ENCODE measurements at regions of chr11 and their contacts with region 1.

Region 1: DNA sequence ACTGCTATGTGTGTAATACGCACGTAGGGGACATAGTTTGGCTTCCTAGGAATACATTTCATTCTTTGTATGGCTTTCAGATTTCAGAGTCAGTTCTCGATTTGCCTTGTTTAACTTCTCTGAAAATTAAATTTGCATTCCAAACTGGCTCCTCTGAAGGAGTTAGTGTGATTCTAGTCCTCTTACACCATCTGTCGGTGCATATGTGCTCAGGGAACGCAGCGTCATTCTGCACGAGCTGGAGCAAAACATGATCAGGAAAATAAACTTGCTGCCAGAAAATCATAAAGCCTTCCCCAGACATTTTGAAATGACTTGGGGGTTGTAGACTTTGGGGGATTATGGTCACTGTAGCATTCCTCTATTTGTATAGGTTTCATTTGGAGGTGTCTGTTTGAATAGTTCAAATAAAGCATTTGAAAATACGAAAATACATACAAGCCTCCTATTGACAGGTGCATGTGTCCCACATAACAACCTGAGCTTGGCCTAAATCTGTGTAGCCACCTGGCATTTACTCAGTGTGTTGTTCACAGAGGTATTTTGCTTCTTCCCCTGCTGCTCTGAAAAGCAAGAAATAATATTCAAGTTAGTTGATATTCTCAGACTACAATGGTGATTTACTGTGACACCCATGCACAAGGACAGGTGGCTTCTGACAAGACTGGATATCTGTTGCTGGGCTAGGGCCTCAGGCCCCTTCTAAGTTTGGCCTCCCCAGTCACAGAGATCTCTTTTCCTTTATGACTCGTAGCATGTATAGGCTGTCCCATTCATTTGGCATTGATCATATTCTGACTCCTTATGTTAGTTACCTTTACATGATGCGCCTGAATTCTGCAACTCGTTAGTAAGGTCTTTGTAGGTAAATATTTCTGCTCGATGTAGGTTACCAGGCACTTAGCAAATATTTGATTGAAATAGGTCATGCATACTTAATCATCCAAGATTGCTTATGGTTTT is 81.6 kb upstream of the SORL1-AS1 start:
- DNase-seq: no peak
- H3K4me3 ChIP-seq: no peak overlapping the region
- H3K27ac ChIP-seq: no peak overlapping the region
- H3K4me1 ChIP-seq: no peaks in the 10 kb centered on the region
- H3K27me3 ChIP-seq: no peaks in the 10 kb centered on the region
- CTCF ChIP-seq: peak; percentile 45 to 73 (median 64)

Region 2: GRCh38 chr11:121318848-121319834 is 215.3 kb before region 1 on chr11:
- intact Hi-C with region 1: loop called (anchors 1 kb)
- DNase-seq: no peak
- H3K4me3 ChIP-seq: no peak overlapping the region
- H3K27ac ChIP-seq: no peak overlapping the region
- H3K4me1 ChIP-seq: no peaks in the 10 kb centered on the region
- H3K27me3 ChIP-seq: no peaks in the 10 kb centered on the region
- CTCF ChIP-seq: peak; percentile 55 to 72 (median 59)

Region 3: DNA sequence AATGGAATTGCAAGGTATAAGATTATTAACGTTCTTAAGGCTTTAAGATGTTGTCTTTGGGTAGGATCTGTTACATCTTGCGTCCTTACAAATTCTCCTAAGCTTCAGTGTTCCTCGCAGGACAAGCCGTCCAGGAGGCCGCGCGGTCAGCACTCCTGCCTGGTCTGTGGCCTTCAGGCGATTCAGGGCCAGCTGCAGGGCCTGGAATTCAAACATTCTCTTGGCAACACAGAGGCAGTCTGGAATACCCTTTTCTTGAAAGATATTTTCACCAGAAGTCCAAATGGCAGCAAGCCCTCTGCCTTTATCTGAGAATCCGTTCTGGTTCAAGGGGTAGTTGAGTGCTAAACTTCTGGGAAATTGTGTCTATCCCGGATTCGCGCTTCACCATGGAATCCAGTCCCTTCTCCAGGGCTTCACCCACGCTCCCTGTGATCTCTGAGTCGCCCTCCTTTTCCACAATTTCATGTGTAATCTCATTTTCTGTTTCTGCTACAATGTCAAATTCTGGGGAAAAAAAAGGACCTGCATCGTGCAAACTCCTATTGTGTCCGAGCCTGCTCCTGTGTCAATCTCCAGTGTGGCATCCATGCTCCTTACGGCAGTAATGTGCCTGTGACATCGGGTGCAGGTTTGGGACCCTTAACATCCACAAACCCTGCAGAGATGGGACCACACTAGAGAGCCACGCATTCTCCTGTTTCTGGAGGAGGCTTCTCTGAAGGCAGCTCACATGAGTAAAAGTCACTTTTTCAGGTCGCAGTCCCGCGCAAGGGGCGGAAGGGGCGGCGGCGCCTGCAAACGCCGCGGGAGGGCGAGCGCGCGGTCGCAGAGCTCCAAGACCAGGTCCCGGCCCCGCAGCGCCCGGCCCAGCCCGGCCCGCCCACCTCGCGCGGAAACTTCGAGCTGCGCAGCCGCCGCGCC is 107.7 kb before region 1 on chr11:
- intact Hi-C with region 1: loop called (anchors 5 kb)
- DNase-seq: no peak
- H3K4me3 ChIP-seq: peak overlapping the region; percentile 27 to 55
- H3K27ac ChIP-seq: no peak overlapping the region
- H3K4me1 ChIP-seq: no peaks in the 10 kb centered on the region
- H3K27me3 ChIP-seq: no peaks in the 10 kb centered on the region
- CTCF ChIP-seq: peak in 2 of 3 experiments; percentile 9 to 26

Region 4: DNA sequence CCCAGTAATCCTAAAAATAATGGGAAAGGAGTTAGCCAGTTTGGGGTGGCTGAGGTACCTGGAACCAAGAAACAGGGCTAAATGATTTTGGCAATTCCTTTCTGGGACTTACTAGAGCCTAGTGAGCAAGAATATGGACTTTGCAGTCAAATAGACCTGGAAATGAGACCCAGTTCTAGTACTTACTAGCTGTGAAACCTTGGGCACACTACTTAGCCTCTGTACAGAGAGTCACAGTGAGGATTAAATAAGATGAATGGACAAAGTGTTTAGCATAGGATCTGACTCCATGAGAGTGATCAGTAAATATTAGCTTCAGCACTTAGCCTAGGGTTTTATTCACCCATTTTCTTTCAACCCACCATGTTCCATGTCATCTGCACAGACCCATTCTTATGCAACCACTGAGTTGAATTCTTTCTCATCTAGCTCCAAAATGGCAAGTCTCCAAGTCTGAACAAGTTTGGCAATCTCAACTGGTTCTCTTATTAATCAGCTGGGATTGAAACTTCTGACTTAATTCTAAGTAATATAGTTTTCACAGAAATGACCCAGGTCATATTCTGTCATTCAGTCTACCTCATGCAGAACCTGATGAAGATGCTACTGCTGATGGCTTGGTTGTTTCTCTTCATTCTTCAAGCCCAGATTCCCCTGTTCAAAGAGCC is 97.3 kb before region 1 on chr11:
- intact Hi-C with region 1: no loop called
- DNase-seq: no peak
- H3K4me3 ChIP-seq: no peak overlapping the region
- H3K27ac ChIP-seq: no peak overlapping the region
- H3K4me1 ChIP-seq: peaks cover 4 to 9% of the 10 kb centered on the region in 2 donors
- H3K27me3 ChIP-seq: no peaks in the 10 kb centered on the region
- CTCF ChIP-seq: no peak

Region 5: GRCh38 chr11:121451986-121452608 is 82.3 kb before region 1 on chr11 and contains the start of gene SORL1:
- intact Hi-C with region 1: loop called (anchors 1 kb)
- DNase-seq: peak in 1 of 2 donors; percentile 86
- H3K4me3 ChIP-seq: peak within 1 kb of the TSS; percentile 74 to 88
- H3K27ac ChIP-seq: peak within 1 kb of the TSS in 1 of 2 donors; percentile 32
- H3K4me1 ChIP-seq: peaks cover 0 to 9% of the 10 kb centered on the region in 2 donors
- H3K27me3 ChIP-seq: no peaks in the 10 kb centered on the region
- CTCF ChIP-seq: peak; percentile 58 to 77 (median 73)
- total RNA-seq, gene SORL1: 10.5 TPM

Region 6: GRCh38 chr11:121634889-121635288 is 100.5 kb after region 1 on chr11:
- intact Hi-C with region 1: no loop called
- DNase-seq: no peak
- H3K4me3 ChIP-seq: no peak overlapping the region
- H3K27ac ChIP-seq: no peak overlapping the region
- H3K4me1 ChIP-seq: peaks cover 0 to 9% of the 10 kb centered on the region in 2 donors
- H3K27me3 ChIP-seq: no peaks in the 10 kb centered on the region
- CTCF ChIP-seq: no peak

Measured in ascending aorta (tissue), 2 donors.